Cardiac septum (tissue), 1 donor: ENCODE measurements at regions of chr7 and their contacts with region 1.

Region 1: DNA sequence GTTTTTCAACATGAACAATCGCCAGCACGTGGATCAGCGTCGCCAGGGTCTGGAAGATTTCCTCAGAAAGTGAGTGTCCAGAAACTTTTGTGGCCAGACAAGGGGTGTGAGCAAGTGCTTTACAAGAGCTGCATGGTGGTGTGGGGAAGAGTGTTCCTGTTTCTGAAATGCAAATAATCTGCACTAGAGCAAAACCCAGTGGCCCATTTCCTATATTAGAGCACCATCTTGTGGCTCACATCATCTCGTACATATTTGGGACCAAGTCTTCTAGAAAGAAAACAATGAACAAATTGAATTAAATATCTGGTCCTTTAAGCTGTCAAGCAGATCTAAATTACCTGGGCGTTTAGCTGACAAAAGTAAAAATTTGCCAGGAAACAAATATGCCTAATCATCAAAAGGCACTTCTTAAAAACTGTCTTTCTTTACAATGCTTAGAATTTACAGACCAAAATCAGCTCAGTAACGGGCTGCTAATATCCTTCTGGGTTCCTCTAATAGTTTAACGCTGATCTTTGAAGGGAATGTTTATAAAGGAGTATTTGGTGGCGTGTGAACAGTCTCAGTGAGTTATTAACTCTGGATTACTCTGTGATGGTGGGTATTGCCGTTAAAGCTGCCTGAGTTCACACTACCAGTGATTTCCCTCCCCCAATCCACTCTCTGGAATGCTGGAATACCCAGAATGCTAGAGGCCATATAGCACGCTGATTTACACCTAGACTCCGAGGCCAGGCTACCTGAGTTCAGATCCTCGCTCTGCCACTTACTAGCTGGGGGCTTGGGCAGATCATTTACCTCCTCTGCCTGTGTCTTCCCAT is 73.6 kb downstream of the SNX10 start:
- DNase-seq: no peak

Region 2: DNA sequence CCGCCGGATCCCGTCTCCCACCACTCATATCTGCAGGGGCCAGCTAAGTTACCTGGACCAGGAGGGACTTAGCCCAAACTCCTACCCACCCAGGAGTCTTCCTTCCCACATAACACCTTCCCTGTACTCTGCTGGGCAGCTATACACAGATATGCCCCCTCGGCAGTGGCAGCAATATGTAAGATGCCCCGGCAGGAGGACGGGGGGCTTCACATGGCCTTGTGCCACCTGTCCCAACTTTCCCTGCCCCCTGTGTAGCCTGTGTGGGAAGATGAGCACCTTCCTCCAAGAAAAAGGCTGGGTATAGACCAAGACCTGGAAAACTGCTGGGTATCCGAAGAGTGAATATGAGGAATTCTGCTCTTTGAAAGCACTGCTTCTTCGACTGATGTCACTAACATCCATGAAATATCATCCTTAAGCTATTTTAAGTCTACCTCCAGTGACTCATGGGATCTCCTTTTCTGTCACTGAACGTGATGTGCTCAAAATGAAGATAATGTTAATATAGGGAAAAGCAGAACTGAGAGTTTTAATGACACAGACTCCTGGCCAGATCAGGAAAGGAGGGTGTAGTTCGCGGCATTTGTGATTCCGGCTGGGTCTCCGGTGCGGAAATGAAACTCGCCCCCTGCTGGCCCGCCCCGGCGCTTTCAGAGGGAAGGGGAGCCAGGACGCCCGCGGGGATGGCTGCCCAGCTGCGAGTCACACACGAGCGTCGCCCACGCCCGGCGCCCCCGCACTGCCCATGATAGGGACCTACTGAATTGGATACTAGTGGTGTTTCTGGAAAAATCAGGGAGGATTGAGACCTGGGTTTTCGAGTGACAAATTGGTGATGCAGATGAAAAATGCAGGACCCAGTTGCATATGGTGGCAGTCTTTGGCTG is 470.1 kb before region 1 on chr7:
- intact Hi-C with region 1: loop called (anchors 1 kb)
- DNase-seq: peak; percentile 81

Region 3: DNA sequence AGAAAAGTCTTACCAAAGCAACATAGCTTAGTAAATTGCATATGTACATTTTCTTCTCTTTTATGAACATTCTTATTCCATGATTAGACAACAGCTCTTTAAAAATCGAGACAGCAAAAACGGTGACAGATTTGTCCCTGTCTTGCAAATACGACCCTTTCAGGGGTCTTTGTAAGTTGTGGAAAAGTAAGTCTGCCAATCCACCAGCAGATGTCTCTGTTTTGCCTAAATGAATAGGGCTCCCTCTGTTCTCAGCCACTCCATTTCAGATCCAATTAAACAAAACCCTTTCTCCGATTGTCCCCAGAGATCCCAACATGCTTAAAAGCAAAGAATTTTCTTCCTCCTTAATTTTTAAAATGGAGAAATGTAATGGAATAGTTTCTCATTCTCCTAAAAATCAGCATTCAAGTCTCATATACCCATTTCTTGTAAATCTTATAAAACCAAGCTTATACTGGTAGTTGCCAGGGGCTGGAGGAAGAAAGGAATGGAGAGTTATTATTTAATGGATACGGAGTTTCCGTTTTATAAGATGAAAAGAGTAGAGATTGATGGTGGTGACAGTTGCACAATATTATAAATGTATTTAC is 274.3 kb before region 1 on chr7:
- intact Hi-C with region 1: loop called (anchors 10 kb)
- DNase-seq: no peak

Region 4: DNA sequence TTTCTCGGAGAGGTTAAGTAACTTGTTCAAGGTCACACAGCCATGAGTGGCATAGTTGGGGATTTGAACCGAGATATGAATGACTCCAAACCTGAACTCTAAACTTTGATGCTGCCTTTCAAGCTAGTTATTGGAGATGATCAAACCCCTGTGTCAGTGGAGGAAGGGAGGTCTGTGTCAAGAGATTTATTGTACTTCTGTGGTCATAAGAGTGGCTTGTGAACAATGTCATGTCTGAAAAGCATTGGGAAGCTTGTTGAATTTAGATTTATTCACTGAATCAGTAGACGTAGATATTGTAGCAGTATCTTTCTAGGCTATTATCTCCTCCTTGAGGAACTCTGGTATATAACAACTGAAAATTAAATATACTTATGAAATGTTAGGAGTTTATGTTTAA is 46.4 kb before region 1 on chr7:
- intact Hi-C with region 1: no loop called
- DNase-seq: no peak

Region 5: DNA sequence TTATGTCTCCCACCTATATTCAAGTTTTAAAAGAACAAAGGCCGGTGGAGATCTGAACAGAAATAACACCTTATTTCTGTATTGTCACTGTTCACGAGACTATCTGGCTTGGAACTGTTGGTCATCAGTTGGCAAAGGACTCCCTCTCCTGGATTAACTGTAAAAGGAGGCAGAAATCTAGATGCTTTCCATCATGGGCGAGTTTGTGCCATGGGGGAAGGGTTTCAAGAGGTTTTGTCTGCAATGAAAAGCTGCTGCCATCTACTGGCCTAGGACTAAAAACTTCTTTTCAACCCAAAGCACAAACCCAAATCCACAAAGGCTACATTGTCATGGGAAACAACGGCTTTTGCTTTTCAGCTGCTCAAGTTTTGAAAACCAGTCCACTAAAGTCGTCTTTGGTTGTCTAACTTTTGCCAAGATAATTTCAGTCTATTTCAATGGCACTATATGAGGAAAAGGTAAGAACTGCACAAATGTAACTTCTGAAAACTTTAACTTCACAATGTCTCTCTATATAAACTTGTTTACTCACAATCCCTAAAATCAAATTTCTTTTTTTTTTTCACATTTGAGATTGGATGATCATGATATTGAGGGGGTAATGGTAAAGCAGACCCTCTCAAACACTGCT is 302.3 kb after region 1 on chr7:
- intact Hi-C with region 1: loop called (anchors 2 kb)
- DNase-seq: no peak

Region 6: DNA sequence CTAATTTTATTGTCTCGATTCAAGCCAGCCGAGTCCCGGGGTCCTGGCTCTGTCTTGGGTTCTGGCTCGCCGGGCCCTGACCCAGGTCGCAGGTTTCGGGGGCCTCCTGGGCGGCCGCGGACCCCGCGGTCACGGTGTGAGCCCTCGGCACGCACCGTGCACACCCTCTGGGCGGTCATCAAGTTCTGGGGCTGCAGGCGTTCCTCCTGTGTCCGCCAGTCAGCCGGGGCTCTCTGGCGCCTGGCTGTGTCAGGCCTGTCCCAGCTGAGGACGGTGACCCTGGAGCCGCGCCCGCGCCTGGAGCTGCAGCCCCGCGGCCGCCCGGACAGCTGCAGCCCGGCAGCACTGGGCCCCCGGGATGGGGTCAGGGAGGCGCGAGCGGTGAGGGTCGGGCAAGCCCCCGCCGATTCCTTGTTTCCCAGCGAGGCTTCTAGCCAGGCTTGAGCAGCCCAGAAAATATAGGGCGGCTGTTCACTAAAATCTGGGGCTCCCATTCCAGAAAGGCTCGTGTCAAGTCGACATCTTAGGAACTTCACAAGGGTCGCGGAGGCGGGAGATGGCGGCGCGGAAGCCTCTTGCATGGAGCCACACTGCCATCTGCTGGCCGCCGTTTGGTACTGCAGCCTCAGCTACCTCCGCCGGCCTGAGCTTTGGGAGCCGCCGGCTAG is 795.4 kb after region 1 on chr7:
- intact Hi-C with region 1: loop called (anchors 2 kb)
- DNase-seq: peak; percentile 92